ENCODE measurements at regions of chr12 and their contacts with region 1.

Region 1: GRCh38 chr12:6792522-6793201 is 3.3 kb downstream of the CD4 start:
- DNase-seq: no peak
- H3K4me3 ChIP-seq: no peak overlapping the region
- H3K27ac ChIP-seq: no peak overlapping the region
- H3K4me1 ChIP-seq: peaks cover 4% of the 10 kb centered on the region
- H3K27me3 ChIP-seq: no peaks in the 10 kb centered on the region
- CTCF ChIP-seq: no peak

Region 2: GRCh38 chr12:6392504-6393077 is 400.1 kb before region 1 on chr12:
- CTCF ChIA-PET with region 1: no interaction called
- dilution Hi-C with region 1: no loop called
- in situ Hi-C with region 1: no loop called
- intact Hi-C with region 1: no loop called
- DNase-seq: no peak
- H3K4me3 ChIP-seq: no peak overlapping the region
- H3K27ac ChIP-seq: no peak overlapping the region
- H3K4me1 ChIP-seq: no peaks in the 10 kb centered on the region
- H3K27me3 ChIP-seq: no peaks in the 10 kb centered on the region
- CTCF ChIP-seq: no peak

Region 3: DNA sequence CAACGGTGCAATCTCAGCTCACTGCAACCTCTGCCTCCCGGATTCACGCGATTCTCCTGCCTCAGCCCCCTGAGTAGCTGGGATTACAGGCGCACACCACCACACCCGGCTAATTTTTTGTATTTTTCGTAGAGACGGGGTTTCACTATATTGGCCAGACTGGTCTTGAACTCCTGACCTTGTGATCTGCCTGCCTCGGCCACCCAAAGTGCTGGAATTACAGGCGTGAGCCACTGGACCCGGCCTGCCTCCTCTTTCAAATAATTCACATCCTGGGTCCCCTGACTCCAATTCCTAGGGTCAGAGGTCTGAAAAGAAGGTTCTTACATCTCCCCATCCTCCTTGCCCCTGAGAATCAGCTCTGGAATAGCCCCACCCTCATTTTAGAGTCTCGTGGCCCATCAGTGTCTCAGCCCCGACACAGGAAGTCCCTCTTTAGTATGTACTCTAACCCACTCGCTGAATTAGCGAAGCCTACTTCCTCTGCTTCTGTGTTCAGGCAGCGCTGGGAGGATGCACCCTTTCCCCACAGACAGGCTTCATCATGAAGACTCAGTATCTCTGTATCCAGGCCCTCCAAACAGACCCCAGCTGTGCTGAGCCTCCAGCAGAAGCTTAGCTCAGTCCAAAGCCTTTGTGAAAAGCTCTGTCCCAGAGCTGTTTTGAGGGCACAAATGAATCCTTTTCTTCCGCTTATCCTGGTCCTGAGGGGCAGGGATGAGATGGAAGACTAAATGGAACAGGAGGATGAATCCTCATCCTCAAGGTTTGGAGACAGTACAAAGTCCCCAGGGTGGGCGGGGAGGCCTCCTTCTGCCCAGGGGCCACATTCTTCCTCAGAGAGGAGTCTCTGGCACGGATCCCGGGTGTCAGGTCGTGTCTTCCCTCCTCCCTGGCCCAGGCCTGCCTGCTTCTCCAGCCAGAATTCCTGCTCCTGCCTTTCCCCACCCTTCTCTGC is 160.4 kb before region 1 on chr12:
- CTCF ChIA-PET with region 1: no interaction called
- dilution Hi-C with region 1: loop called (anchors 10 kb)
- in situ Hi-C with region 1: no loop called
- intact Hi-C with region 1: no loop called
- DNase-seq: no peak
- H3K4me3 ChIP-seq: no peak overlapping the region
- H3K27ac ChIP-seq: no peak overlapping the region
- H3K4me1 ChIP-seq: peaks cover 5% of the 10 kb centered on the region
- H3K27me3 ChIP-seq: no peaks in the 10 kb centered on the region
- CTCF ChIP-seq: no peak

Region 4: GRCh38 chr12:6730169-6730568 is 62.5 kb before region 1 on chr12:
- CTCF ChIA-PET with region 1: no interaction called
- dilution Hi-C with region 1: loop called (anchors 5 kb)
- in situ Hi-C with region 1: no loop called
- intact Hi-C with region 1: no loop called
- DNase-seq: no peak
- H3K4me3 ChIP-seq: no peak overlapping the region
- H3K27ac ChIP-seq: no peak overlapping the region
- H3K4me1 ChIP-seq: peaks cover 2% of the 10 kb centered on the region
- H3K27me3 ChIP-seq: no peaks in the 10 kb centered on the region
- CTCF ChIP-seq: no peak

Region 5: GRCh38 chr12:6851921-6852650 is 59.4 kb after region 1 on chr12 and contains the start of gene USP5:
- CTCF ChIA-PET with region 1: no interaction called
- dilution Hi-C with region 1: loop called (anchors 10 kb)
- in situ Hi-C with region 1: no loop called
- intact Hi-C with region 1: no loop called
- DNase-seq: peak; percentile 100
- H3K4me3 ChIP-seq: peak within 1 kb of the TSS; percentile 65 to 84 (median 78)
- H3K27ac ChIP-seq: peak within 1 kb of the TSS; percentile 84
- H3K4me1 ChIP-seq: peaks cover 20% of the 10 kb centered on the region
- H3K27me3 ChIP-seq: no peaks in the 10 kb centered on the region
- CTCF ChIP-seq: no peak
- total RNA-seq, gene USP5: 79.4 to 128 TPM

Measured in mammary epithelial cell (primary cell).